ENCODE measurements at regions of chr13 and their contacts with region 1.

Region 1: DNA sequence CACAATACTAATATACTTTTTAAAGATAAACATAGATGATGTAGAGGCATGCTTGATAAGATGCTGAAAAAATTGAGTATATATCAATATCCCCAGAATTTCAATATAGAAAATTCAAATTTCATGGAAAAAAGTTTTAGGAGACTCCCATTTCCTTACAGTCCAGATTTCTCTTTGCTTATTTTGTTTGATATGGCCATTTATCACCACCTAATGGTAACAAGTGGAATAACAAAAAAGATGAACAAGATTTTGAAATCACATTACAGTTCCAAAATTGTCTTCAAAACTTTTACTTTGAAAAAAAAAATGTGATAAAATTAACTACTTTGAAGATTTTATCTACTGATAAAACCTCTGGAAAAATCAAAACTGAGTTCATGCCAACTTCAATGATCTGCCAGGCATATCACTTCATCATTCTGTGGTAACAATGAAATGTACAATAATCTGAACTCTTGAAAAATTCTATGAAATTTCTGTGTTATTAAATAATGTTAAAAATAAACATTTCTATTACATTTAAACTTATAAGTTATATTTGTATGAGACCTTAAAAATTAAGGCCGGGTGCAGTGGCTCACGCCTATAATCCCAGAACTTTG is 17.5 kb downstream of the MIPEP start:
- DNase-seq: peak in 1 of 4 donors; percentile 46
- ATAC-seq: peak; percentile 69
- H3K4me3 ChIP-seq: no peak overlapping the region
- H3K27ac ChIP-seq: no peak overlapping the region
- H3K4me1 ChIP-seq: peaks cover 5 to 19% of the 10 kb centered on the region in 2 donors
- H3K27me3 ChIP-seq: no peaks in the 10 kb centered on the region
- CTCF ChIP-seq: peak; percentile 30 to 39

Region 2: DNA sequence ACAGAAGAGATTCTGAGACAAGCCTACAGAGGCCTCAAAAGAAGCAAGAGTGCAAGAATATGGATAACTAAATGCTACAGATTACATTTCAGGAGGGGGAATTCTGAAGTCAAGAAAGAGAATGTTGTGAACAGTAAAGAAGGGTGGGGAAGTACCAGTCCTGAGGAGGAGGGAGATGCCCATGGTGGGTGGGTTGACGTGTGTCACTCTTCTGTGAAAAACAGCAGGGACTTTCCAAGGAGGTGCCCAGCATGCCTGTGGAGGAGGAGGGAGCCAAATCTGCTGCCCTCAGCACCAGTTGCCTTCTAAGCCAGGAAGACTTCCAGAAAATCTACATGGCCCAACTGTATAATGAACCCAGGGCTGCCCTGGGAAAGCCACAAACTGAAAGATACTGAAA is 603.3 kb before region 1 on chr13:
- intact Hi-C with region 1: no loop called
- DNase-seq: no peak
- ATAC-seq: no peak
- H3K4me3 ChIP-seq: no peak overlapping the region
- H3K27ac ChIP-seq: no peak overlapping the region
- H3K4me1 ChIP-seq: no peaks in the 10 kb centered on the region
- H3K27me3 ChIP-seq: no peaks in the 10 kb centered on the region
- CTCF ChIP-seq: no peak

Region 3: GRCh38 chr13:23466144-23467002 is 405.3 kb before region 1 on chr13:
- intact Hi-C with region 1: loop called in 1 of 2 experiments (anchors 10 kb)
- DNase-seq: peak; percentile 69 to 90 (median 86)
- ATAC-seq: peak; percentile 96
- H3K4me3 ChIP-seq: peak overlapping the region; percentile 44 to 48
- H3K27ac ChIP-seq: peak overlapping the region; percentile 63 to 79
- H3K4me1 ChIP-seq: peaks cover 3 to 16% of the 10 kb centered on the region in 2 donors
- H3K27me3 ChIP-seq: no peaks in the 10 kb centered on the region
- CTCF ChIP-seq: peak; percentile 41 to 44

Region 4: GRCh38 chr13:23715762-23716235 is 155.9 kb before region 1 on chr13:
- intact Hi-C with region 1: loop called in 1 of 2 experiments (anchors 10 kb)
- DNase-seq: peak in 1 of 4 donors; percentile 28
- ATAC-seq: peak; percentile 90
- H3K4me3 ChIP-seq: no peak overlapping the region
- H3K27ac ChIP-seq: no peak overlapping the region
- H3K4me1 ChIP-seq: no peaks in the 10 kb centered on the region
- H3K27me3 ChIP-seq: no peaks in the 10 kb centered on the region
- CTCF ChIP-seq: peak in 1 of 2 donors; percentile 22

Region 5: DNA sequence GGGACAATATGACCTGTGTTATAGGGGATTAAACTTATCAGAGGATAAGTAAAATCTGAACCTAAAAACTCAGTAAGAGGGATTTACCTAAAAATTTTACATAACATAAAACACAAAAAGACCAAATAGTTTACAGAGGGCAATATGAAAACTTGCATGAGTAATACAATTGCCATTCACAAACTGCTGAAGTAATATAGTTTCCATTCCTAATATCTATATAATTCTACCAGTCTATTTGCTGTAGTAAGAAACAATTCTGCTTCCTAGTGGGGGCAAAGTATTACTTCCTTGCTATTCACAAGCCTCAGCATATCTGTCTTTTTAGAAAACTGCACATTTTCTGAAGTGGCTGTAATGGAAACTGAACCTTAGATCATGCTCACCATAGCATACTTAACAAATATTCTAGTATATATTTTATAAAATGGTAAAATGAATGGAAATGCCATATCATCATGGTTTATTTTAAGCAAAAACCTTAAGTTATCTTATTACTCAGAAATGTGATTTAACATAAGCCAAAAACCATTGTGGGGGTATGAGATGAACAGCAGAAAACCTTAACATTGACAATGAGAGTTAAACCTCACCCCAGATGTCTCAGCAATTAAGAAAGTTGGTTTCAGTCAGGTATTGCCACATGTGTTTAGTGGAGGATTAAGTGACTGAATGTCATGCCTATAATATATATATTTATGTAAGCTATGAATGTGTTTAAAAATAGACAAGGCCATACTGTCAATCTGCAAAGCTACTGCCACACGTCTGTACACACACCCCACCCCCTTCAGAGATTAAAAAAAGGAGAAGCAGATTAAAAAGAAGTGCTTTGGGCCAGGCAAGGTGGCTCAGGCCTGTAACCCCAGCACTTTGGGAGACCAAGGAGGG is 119.4 kb before region 1 on chr13:
- intact Hi-C with region 1: no loop called
- DNase-seq: no peak
- ATAC-seq: no peak
- H3K4me3 ChIP-seq: no peak overlapping the region
- H3K27ac ChIP-seq: peak overlapping the region in 1 of 2 donors; percentile 54
- H3K4me1 ChIP-seq: peaks cover 12 to 17% of the 10 kb centered on the region in 2 donors
- H3K27me3 ChIP-seq: no peaks in the 10 kb centered on the region
- CTCF ChIP-seq: no peak

Region 6: DNA sequence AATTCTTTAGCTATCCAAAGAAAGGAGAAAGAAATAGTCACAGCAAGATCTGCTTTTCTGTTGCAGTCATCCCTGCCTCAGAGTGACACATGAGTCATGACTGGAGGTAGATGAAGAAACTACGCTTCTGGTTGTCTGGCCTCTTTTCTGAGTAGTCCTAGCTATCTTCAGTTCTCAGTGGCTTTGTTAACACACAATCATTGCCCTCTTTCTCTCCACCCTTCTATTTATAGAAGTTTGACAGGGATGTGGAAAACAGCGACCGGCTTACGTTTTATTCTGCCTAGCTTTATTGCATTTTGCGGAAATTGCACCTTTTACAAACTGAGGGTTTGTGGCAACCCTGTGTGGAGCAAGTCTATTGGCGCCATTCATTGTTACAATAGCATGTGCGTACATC is 315.5 kb after region 1 on chr13:
- intact Hi-C with region 1: no loop called
- DNase-seq: no peak
- ATAC-seq: no peak
- H3K4me3 ChIP-seq: no peak overlapping the region
- H3K27ac ChIP-seq: no peak overlapping the region
- H3K4me1 ChIP-seq: no peaks in the 10 kb centered on the region
- H3K27me3 ChIP-seq: no peaks in the 10 kb centered on the region
- CTCF ChIP-seq: no peak